Activated T-helper 2 cell treated with anti-CD3 and anti-CD28 coated beads, Interferon-gamma antibody, Interleukin-2, Interleukin-4, amounts not matched to agents 10 μg/mL and 5 μg/mL and 100 μg/mL, durations not matched to agents 14 hours and 24 hours and 36 hours (primary cell): ENCODE measurements at regions of chr3 and their contacts with region 1.

Region 1: DNA sequence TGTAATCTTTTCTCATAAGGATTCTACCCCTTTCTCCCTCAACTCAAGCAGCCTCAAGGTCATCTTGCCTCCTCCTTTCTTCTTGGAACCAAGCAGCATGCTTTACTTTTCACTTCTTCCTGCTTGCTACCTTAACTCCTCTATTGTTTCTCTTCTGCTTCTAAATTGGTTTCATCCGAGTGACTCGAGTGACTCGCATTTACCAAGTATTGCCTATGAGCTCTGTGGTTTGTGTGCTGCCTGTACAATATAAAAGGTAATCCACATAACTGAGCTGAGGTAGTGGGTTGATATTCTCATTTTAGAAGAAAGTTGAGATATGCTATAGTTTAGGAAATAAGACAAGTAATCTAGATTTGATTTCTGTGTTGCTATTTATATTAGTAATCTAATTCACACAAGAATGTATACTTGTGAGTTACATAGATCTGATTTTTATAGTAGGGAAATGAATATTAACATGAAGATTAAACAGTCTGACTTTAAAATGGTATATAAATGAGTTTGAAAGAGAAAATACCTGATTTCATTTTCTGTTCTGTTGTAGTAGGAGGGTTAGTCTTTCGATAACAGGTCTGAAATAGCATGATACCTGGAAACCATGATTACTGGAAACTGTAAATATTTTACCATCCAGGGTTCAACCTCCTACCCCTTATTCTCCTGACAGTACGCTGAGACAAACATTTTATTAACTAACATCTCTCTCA is 5.5 kb downstream of the HHLA2 start:
- DNase-seq: no peak
- H3K4me3 Mint-ChIP-seq: peak overlapping the region; percentile 37
- H3K27ac Mint-ChIP-seq: peak overlapping the region; percentile 81
- H3K4me1 Mint-ChIP-seq: peaks cover 50% of the 10 kb centered on the region
- H3K27me3 Mint-ChIP-seq: no peaks in the 10 kb centered on the region

Region 2: GRCh38 chr3:108124337-108125152 is 177.3 kb before region 1 on chr3:
- intact Hi-C with region 1: loop called (anchors 2 kb)
- DNase-seq: peak; percentile 68
- H3K4me3 Mint-ChIP-seq: peak overlapping the region; percentile 96
- H3K27ac Mint-ChIP-seq: peak overlapping the region; percentile 99
- H3K4me1 Mint-ChIP-seq: peaks cover 66% of the 10 kb centered on the region
- H3K27me3 Mint-ChIP-seq: no peaks in the 10 kb centered on the region

Region 3: GRCh38 chr3:108208831-108209230 is 93.0 kb before region 1 on chr3:
- intact Hi-C with region 1: no loop called
- DNase-seq: no peak
- H3K4me3 Mint-ChIP-seq: no peak overlapping the region
- H3K27ac Mint-ChIP-seq: no peak overlapping the region
- H3K4me1 Mint-ChIP-seq: peaks cover 5% of the 10 kb centered on the region
- H3K27me3 Mint-ChIP-seq: no peaks in the 10 kb centered on the region

Region 4: DNA sequence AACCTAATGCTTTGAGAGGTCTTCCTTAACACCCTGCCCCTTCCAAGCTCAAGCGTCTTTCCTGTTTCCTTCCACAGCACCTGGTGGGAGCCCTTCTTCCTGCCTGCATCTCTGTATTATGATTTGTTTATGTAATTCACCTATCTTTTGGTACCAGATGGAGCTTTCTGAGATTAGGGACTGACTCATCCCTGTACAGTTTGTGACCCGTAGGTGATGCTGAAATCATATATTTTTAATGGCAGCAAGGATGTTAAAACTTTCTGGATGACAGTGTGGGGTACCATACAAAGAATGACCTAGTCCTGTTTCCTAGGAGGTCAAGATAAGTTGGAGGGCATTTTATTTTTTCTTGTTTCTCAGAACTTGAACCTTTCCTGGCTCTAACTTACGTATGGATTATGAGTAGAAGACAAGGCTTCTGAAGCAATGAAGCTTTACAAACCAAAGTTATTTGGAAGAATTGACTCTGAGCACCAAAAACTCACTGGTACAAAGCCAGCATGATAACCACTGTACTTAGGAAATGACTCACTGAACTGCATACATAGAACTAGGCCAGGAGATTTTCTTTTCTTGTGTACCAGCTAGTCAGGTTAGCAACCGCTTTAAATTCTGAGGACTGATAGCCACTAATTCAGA is 41.1 kb after region 1 on chr3:
- intact Hi-C with region 1: loop called (anchors 5 kb)
- DNase-seq: no peak
- H3K4me3 Mint-ChIP-seq: no peak overlapping the region
- H3K27ac Mint-ChIP-seq: peak overlapping the region; percentile 28
- H3K4me1 Mint-ChIP-seq: peaks cover 18% of the 10 kb centered on the region
- H3K27me3 Mint-ChIP-seq: peaks cover 21% of the 10 kb centered on the region